Dendritic cell treated with granulocyte-macrophage colony-stimulating factor and Interleukin-4, amounts not matched to agents 40 ng/mL and 50 ng/mL, for 4 days (primary cell): ENCODE measurements at regions of chr18 and their contacts with region 1.

Region 1: DNA sequence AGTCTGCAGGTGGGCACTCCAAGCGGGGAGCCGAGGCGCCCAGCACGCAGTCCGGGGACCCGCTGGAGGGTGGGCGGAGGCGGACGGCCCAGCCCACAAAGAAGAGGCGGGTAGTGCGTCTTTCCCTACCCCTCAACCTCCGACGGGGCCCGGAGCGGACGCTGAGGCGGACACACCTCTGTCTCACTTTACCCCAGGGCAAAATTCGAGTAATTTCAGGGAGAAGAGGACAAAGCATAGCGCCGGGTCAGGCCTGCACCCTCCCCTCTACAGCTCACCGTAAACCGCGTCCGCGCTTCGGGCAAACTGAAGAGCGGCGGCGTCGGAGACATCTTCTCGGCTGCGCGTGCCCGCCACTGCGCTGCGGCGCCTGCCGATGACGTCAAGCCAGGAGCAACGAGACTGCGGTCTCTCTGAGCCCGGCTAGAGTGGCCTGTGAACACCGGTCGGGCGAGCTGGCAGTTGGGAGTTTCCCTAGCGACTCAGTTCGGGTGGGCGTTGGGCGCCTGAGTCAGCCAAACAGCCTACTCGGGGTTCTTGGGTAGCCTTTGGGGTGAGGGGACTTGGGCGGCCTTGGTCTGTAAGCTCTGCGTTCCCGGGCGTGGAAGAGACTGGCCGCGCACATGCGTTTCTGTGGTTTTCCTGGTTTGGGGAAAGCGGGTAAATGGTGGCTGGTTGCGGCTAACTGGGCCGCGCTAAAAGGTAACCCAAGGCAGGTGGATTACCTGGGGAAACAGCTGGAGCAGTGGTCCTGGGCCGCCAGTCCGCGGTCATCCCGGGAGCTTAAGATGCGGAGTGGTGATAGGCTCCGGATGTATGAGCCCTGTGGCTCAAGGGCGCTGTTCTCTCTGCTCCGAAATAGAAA is at the start of gene THOC1:
- H3K4me3 Mint-ChIP-seq: peak within 1 kb of the TSS; percentile 99
- H3K27ac Mint-ChIP-seq: peak within 1 kb of the TSS; percentile 100
- H3K4me1 Mint-ChIP-seq: peaks cover 38% of the 10 kb centered on the region
- H3K27me3 Mint-ChIP-seq: no peaks in the 10 kb centered on the region

Region 2: GRCh38 chr18:158128-159036 is 109.5 kb before region 1 on chr18 and contains the start of gene USP14:
- intact Hi-C with region 1: loop called (anchors 1 kb)
- H3K4me3 Mint-ChIP-seq: peak within 1 kb of the TSS; percentile 91
- H3K27ac Mint-ChIP-seq: peak within 1 kb of the TSS; percentile 93
- H3K4me1 Mint-ChIP-seq: peaks cover 26% of the 10 kb centered on the region
- H3K27me3 Mint-ChIP-seq: no peaks in the 10 kb centered on the region

Region 3: DNA sequence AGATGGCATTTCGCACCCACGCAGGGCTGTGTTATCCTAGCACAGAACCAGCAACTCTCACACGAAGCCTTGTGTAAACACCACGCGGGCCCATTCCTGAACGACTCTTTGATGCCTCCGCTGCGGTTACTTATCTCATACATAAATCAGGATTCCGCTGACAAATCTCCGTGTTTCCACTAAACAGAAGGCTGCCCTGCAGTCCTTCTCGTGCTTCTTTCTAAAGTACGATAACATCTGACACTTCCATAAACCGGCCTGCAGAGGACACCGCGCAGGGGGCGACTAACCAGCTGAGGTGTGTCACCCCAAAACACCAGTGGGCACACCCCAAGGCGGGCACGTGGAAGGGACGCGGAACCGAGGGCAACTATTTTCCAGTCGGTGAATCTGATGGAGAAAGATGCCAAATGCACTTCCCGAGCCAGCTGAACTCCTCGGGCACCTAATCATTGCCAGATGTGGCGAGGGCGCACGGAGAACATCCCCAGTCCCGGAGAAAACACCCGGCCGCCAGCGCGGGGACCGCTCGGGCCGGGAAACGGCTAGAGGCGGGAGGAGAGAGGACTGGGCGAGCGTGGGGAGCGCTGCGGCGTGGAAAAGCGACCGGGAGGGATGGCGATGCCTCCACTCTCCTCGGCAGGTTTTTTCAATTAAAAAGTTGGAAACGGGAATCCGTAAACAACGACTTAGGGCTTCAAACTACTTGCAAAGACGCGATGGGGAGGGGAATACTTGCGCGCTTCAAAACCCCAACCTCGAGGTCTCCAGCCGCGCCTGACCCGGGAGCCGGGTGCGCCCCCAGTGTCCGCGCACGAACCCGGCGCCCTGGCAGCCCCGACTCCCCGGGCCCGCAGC is 231.9 kb after region 1 on chr18:
- intact Hi-C with region 1: loop called (anchors 5 kb)
- H3K4me3 Mint-ChIP-seq: peak overlapping the region; percentile 86
- H3K27ac Mint-ChIP-seq: peak overlapping the region; percentile 66
- H3K4me1 Mint-ChIP-seq: peaks cover 32% of the 10 kb centered on the region
- H3K27me3 Mint-ChIP-seq: peaks cover 62% of the 10 kb centered on the region

Region 4: GRCh38 chr18:712401-713134 is 444.6 kb after region 1 on chr18 and contains the start of gene ENOSF1:
- intact Hi-C with region 1: loop called (anchors 10 kb)
- H3K4me3 Mint-ChIP-seq: peak within 1 kb of the TSS; percentile 80
- H3K27ac Mint-ChIP-seq: peak within 1 kb of the TSS; percentile 80
- H3K4me1 Mint-ChIP-seq: peaks cover 18% of the 10 kb centered on the region
- H3K27me3 Mint-ChIP-seq: peaks cover 28% of the 10 kb centered on the region